A673 (cell line): ENCODE measurements at regions of chr16 and their contacts with region 1.

Region 1: DNA sequence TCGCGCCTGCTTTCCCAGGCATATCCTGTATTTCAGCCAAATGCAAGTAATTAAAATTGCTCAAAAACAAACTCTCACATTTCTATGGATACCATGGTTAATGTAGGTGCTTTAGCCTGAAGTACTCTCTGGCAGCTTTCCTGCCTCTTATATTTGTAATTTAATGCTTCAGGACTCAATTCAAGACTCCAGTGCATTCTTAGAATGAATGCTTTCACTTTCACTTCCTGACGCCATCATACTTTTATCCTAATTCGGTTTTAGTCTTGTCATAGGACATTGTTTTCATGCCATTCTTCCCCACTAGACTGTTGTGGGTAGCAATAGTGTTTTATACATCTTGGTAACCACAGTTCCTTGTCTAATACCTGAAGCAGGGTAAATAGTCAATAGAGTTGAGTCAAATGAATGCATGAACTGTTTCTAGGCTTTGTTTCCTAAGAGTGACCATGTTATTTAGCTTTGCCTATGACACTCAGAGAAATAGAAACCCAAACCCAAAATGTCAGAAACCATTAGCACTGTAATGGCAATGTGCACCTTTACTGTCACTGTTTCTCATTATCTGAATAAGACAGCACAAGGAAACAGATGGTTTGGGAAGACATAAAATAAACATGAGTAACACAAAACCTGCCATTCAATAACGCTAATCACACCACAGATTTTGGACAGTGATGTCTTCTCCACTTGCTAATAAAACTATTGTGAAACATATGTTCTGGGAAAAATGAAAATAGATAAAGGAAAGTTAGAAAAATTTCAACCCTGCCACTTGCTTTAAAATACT is 705.5 kb downstream of the CDH11 start:
- DNase-seq: peak; percentile 7
- H3K4me3 ChIP-seq: peak overlapping the region; percentile 26
- H3K27ac ChIP-seq: no peak overlapping the region
- H3K4me1 ChIP-seq: no peaks in the 10 kb centered on the region
- H3K27me3 ChIP-seq: no peaks in the 10 kb centered on the region
- CTCF ChIP-seq: no peak

Region 2: GRCh38 chr16:64469906-64470702 is 53.7 kb after region 1 on chr16:
- CTCF ChIA-PET with region 1: no interaction called
- POLR2A ChIA-PET with region 1: no interaction called
- intact Hi-C with region 1: loop called (anchors 5 kb)
- DNase-seq: no peak
- H3K4me3 ChIP-seq: no peak overlapping the region
- H3K27ac ChIP-seq: no peak overlapping the region
- H3K4me1 ChIP-seq: no peaks in the 10 kb centered on the region
- H3K27me3 ChIP-seq: no peaks in the 10 kb centered on the region
- CTCF ChIP-seq: 0 out of 2 replicates have a peak, but pooled peaks have one; percentile 11